ENCODE measurements at regions of chr1 and their contacts with region 1.

Region 1: DNA sequence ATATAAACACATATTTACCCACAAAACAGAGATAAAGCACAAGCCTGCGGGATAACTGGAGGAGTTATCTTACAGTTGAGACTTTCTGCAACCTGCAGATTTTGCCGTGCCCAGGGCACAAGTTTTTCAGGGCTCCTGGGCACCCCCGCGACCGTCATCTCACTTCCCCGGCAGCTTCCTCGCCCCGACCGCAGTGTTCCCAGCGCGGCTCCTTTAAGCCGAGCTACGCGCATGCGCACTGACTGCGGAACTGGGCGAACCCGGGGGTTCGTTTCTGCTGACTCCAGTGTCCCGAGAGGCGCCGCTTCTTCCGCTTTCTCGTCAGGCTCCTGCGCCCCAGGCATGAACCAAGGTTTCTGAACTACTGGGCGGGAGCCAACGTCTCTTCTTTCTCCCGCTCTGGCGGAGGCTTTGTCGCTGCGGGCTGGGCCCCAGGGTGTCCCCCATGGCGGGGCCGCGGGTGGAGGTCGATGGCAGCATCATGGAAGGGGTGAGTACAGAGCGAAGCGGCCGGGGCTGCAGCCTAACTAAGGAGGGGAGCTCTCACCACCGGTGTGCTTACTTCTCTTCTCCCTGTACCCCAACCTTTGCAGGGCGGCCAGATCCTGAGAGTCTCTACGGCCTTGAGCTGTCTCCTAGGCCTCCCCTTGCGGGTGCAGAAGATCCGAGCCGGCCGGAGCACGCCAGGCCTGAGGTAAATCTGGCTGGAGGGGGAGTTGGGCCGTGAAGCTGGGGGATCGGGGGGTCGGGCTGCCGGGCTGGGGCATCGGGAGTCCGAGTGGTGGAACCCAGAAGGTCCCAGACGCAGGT is at the start of gene RTCA:
- DNase-seq: peak; percentile 95
- CTCF ChIP-seq: no peak

Region 2: GRCh38 chr1:100249537-100250257 is 16.4 kb before region 1 on chr1 and contains the start of gene DBT:
- CTCF ChIA-PET with region 1: interaction called, 5 read pairs
- POLR2A ChIA-PET with region 1: interaction called, 13 read pairs
- DNase-seq: peak; percentile 94
- CTCF ChIP-seq: no peak